Activated CD4-positive, alpha-beta memory T cell treated with anti-CD3 and anti-CD28 coated beads for 36 hours (primary cell): ENCODE measurements at regions of chr1 and their contacts with region 1.

Region 1: DNA sequence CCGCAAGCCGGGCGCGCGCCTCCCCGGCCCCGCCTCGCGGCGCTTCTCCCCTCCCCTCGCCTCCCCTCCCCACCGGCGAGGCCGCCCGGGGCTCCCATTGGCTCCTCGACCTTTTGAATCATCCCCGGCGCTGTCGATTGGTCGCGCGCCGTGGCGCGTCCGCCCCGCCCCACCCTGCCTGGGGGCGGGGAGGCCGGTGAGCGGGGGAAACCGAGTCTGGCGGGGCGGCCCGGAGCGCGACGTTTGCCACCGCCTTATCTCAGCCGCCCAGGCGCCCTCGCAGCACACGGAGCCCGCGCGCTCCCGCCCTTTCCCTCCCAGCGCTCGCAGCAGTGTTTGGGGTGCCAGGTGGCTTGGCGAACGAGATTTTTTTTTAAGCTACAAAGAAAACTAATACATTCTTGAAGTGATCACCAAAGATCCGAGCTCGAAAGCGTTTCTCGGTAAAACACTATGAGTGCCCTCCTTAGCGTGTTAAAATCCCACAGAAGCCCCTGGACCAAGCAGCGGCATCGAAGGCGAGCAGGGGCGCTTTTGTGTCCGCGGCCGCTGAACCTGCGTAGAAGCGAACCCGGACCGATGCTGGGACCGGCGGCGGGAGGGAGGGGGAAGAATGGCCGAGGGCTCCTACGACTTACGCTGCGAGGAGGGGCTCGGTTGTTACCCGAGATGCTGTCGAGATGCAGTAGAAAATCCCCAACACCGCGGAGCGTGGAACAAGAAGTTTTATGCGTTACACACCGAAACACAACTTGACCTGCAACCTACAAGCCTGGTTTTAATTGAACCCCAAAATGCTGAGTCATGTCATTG is 436 bp upstream of the LBR start:
- DNase-seq: peak; percentile 95
- H3K4me3 Mint-ChIP-seq: peak overlapping the region; percentile 89
- H3K27ac Mint-ChIP-seq: peak overlapping the region; percentile 97
- H3K4me1 Mint-ChIP-seq: peaks cover 44% of the 10 kb centered on the region
- H3K27me3 Mint-ChIP-seq: no peaks in the 10 kb centered on the region

Region 2: DNA sequence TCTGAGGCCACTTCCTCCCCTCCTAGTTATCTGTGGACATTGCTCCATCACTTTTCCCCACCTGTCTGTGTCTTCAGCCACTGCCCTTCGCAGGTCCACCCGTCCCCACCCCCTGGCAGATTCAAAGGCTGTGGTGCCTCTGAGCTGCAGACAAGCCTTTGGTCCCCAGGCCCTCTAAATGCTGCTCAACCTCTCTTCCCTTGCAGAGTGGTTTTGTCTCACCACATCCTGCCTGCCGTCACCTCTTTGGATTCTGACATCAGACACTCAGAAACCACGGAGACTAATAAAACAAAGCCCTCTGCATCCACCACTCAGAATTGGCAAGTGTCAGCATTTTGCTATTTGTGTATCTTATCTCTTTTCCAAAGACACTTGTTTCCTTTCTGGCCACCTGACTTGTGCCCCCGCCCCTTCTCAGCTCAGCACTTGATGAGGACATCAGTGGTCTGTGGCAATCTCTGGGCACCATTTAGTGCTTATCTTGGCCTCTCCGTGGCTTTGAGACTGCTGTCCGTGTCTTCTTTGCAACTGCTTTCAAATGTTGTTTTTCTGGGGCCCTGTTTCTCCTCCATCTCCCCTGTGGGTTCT is 804.4 kb before region 1 on chr1:
- CTCF ChIA-PET with region 1: no interaction called
- POLR2A ChIA-PET with region 1: no interaction called
- intact Hi-C with region 1: loop called (anchors 5 kb)
- DNase-seq: peak; percentile 90
- H3K4me3 Mint-ChIP-seq: peak overlapping the region; percentile 45
- H3K27ac Mint-ChIP-seq: peak overlapping the region; percentile 87
- H3K4me1 Mint-ChIP-seq: peaks cover 34% of the 10 kb centered on the region
- H3K27me3 Mint-ChIP-seq: peaks cover 28% of the 10 kb centered on the region

Region 3: DNA sequence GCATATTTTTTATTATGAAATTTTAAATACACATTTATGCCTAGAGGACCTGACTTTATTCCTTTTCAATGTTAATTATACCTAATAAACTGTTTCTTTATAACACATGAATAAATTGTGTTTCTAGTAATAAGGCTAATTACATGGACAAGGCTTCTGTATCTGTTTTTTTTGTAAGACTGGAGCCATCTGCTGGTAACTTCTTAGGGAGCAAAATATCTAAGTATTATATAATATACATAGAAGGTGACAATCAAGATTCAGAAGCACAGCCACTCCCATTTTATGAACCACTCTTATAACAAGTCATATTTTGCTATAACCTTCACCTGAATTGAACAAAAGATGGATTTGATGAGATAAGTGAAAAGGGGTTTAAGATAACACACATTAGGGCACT is 84.7 kb before region 1 on chr1:
- CTCF ChIA-PET with region 1: no interaction called
- POLR2A ChIA-PET with region 1: no interaction called
- intact Hi-C with region 1: no loop called
- DNase-seq: no peak
- H3K4me3 Mint-ChIP-seq: no peak overlapping the region
- H3K27ac Mint-ChIP-seq: no peak overlapping the region
- H3K4me1 Mint-ChIP-seq: no peaks in the 10 kb centered on the region
- H3K27me3 Mint-ChIP-seq: peaks cover 20% of the 10 kb centered on the region

Region 4: DNA sequence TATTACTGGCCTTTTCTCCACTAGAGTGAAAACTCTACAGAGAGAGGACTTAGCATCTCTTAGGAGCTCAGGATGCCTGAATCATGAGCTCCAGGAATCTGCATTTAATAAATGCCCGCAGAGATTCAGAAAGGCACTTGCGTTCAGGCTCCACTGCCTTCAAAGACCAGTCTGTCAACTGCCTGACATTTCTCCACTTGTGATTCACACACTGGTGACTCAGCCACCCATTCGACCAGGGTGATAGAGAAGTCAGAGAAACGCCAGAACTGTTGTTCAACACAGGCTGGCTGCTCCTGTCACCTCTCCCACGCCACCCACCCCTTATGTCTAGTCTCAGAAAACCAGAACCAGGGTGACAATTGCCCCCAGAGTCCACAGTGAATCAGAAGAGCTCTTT is 26.5 kb after region 1 on chr1:
- CTCF ChIA-PET with region 1: no interaction called
- POLR2A ChIA-PET with region 1: interaction called, 14 read pairs
- intact Hi-C with region 1: no loop called
- DNase-seq: peak; percentile 91
- H3K4me3 Mint-ChIP-seq: peak overlapping the region; percentile 16
- H3K27ac Mint-ChIP-seq: peak overlapping the region; percentile 73
- H3K4me1 Mint-ChIP-seq: peaks cover 39% of the 10 kb centered on the region
- H3K27me3 Mint-ChIP-seq: no peaks in the 10 kb centered on the region